ENCODE measurements at regions of chr1 and their contacts with region 1.

Region 1: GRCh38 chr1:212035123-212035834 is at the starts of genes DTL and INTS7:
- DNase-seq: peak; percentile 94 to 99 (median 97)
- ATAC-seq: peak; percentile 89 to 90 (median 90)
- H3K4me3 ChIP-seq: peak within 1 kb of the TSS; percentile 61 to 98
- H3K4me3 Mint-ChIP-seq: peak within 1 kb of the TSS; percentile 87 to 99 (median 90)
- H3K27ac ChIP-seq: peak within 1 kb of the TSS; percentile 53
- H3K27ac Mint-ChIP-seq: peak within 1 kb of the TSS; percentile 88 to 99
- H3K4me1 ChIP-seq: peaks cover 13 to 18% of the 10 kb centered on the region in 2 experiments
- H3K4me1 Mint-ChIP-seq: peaks cover 57 to 65% (median 59%) of the 10 kb centered on the region in 3 donors
- H3K27me3 ChIP-seq: no peaks in the 10 kb centered on the region
- H3K27me3 Mint-ChIP-seq: peaks cover 0 to 6% of the 10 kb centered on the region in 2 donors
- total RNA-seq, gene DTL: 0.44 to 1.9 (median 1.2) TPM
- total RNA-seq, gene INTS7: 8.5 to 12.2 (median 8.8) TPM

Region 2: DNA sequence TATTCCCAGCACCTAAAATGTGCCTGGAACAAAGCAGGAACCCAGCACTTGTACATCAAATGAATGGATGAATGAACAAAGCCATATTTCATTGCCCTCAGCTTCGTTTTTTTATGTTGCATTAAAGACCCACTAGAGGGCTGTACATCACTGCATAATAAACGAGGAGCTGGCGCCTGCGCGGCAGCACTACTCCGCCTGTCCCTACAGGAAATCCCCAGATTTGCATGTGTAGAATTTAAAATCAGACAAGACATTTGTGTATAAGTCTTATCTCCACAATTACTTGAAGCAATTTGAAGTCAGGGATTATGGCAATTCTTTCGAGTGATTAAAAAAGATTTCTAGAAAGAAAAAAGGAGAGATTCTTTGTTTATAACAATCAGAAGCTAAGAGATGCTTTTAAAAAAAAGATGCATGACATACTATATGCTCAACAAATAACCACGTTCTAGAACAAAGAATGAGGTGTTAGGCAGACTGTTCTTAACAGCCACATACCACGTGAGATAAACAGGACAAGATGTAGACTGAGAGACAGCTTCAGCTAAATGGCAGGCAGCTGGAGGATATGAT is 354.4 kb before region 1 on chr1:
- CTCF ChIA-PET with region 1: interaction called, 4 to 52 read pairs
- POLR2A ChIA-PET with region 1: interaction called in 1 of 2 experiments, 3 read pairs
- DNase-seq: peak; percentile 30 to 91 (median 70)
- ATAC-seq: peak; percentile 91 to 96 (median 92)
- H3K4me3 ChIP-seq: no peak overlapping the region
- H3K4me3 Mint-ChIP-seq: peak overlapping the region in 2 of 3 donors; percentile 14 to 40
- H3K27ac ChIP-seq: peak overlapping the region; percentile 89
- H3K27ac Mint-ChIP-seq: peak overlapping the region; percentile 84 to 94
- H3K4me1 ChIP-seq: peaks cover 9 to 22% of the 10 kb centered on the region in 2 experiments
- H3K4me1 Mint-ChIP-seq: peaks cover 14 to 24% (median 20%) of the 10 kb centered on the region in 3 donors
- H3K27me3 ChIP-seq: no peaks in the 10 kb centered on the region
- H3K27me3 Mint-ChIP-seq: no peaks in the 10 kb centered on the region

Region 3: GRCh38 chr1:212021563-212021962 is 13.7 kb before region 1 on chr1:
- CTCF ChIA-PET with region 1: interaction called in 1 of 2 experiments, 12 read pairs
- POLR2A ChIA-PET with region 1: no interaction called
- DNase-seq: no peak
- ATAC-seq: no peak
- H3K4me3 ChIP-seq: no peak overlapping the region
- H3K4me3 Mint-ChIP-seq: no peak overlapping the region
- H3K27ac ChIP-seq: no peak overlapping the region
- H3K27ac Mint-ChIP-seq: no peak overlapping the region
- H3K4me1 ChIP-seq: no peaks in the 10 kb centered on the region
- H3K4me1 Mint-ChIP-seq: peaks cover under 1 to 4% (median 2%) of the 10 kb centered on the region in 3 donors
- H3K27me3 ChIP-seq: no peaks in the 10 kb centered on the region
- H3K27me3 Mint-ChIP-seq: no peaks in the 10 kb centered on the region

Region 4: GRCh38 chr1:212070720-212071302 is 35.5 kb after region 1 on chr1:
- CTCF ChIA-PET with region 1: interaction called, 5 to 20 read pairs
- POLR2A ChIA-PET with region 1: no interaction called
- DNase-seq: peak in 1 of 35 experiments; percentile 68
- ATAC-seq: peak; percentile 58 to 75 (median 68)
- H3K4me3 ChIP-seq: no peak overlapping the region
- H3K4me3 Mint-ChIP-seq: no peak overlapping the region
- H3K27ac ChIP-seq: no peak overlapping the region
- H3K27ac Mint-ChIP-seq: no peak overlapping the region
- H3K4me1 ChIP-seq: no peaks in the 10 kb centered on the region
- H3K4me1 Mint-ChIP-seq: no peaks in the 10 kb centered on the region
- H3K27me3 ChIP-seq: no peaks in the 10 kb centered on the region
- H3K27me3 Mint-ChIP-seq: no peaks in the 10 kb centered on the region

Region 5: GRCh38 chr1:212432706-212433576 is 397.7 kb after region 1 on chr1 and contains the start of gene NENF:
- CTCF ChIA-PET with region 1: interaction called in 1 of 2 experiments, 10 read pairs
- POLR2A ChIA-PET with region 1: no interaction called
- DNase-seq: peak; percentile 28 to 81 (median 65)
- ATAC-seq: peak; percentile 99 to 100 (median 100)
- H3K4me3 ChIP-seq: peak within 1 kb of the TSS; percentile 52 to 59
- H3K4me3 Mint-ChIP-seq: peak within 1 kb of the TSS; percentile 68 to 79 (median 75)
- H3K27ac ChIP-seq: no peak within 1 kb of the TSS
- H3K27ac Mint-ChIP-seq: peak within 1 kb of the TSS in 1 of 2 donors; percentile 77
- H3K4me1 ChIP-seq: peaks cover 2 to 19% of the 10 kb centered on the region in 2 experiments
- H3K4me1 Mint-ChIP-seq: peaks cover 28 to 40% (median 36%) of the 10 kb centered on the region in 3 donors
- H3K27me3 ChIP-seq: no peaks in the 10 kb centered on the region
- H3K27me3 Mint-ChIP-seq: no peaks in the 10 kb centered on the region
- total RNA-seq, gene NENF: 17.4 to 29.3 (median 25.9) TPM

Measured in T-cell (primary cell).